HEK293 (cell line): ENCODE measurements at regions of chr11 and their contacts with region 1.

Region 1: GRCh38 chr11:76820184-76820566 is 37.0 kb downstream of the TSKU start:
- H3K4me3 ChIP-seq: no peak overlapping the region
- H3K27ac ChIP-seq: no peak overlapping the region
- H3K4me1 ChIP-seq: no peaks in the 10 kb centered on the region
- CTCF ChIP-seq: no peak

Region 2: GRCh38 chr11:76654298-76654851 is 165.8 kb before region 1 on chr11:
- CTCF ChIA-PET with region 1: no interaction called
- POLR2A ChIA-PET with region 1: no interaction called
- H3K4me3 ChIP-seq: no peak overlapping the region
- H3K27ac ChIP-seq: no peak overlapping the region
- H3K4me1 ChIP-seq: no peaks in the 10 kb centered on the region
- CTCF ChIP-seq: no peak

Region 3: GRCh38 chr11:76807206-76807875 is 12.8 kb before region 1 on chr11:
- CTCF ChIA-PET with region 1: interaction called, 26 read pairs
- POLR2A ChIA-PET with region 1: no interaction called
- H3K4me3 ChIP-seq: no peak overlapping the region
- H3K27ac ChIP-seq: no peak overlapping the region
- H3K4me1 ChIP-seq: no peaks in the 10 kb centered on the region
- CTCF ChIP-seq: peak; percentile 74